CD4-positive, alpha-beta memory T cell (primary cell): ENCODE measurements at regions of chr9 and their contacts with region 1.

Region 1: GRCh38 chr9:129726322-129727160 is 26.3 kb downstream of the PTGES start:
- DNase-seq: peak in 4 of 5 donors; percentile 49 to 52 (median 50)
- H3K4me3 ChIP-seq: no peak overlapping the region
- H3K4me3 Mint-ChIP-seq: peak overlapping the region in 4 of 8 donors; percentile 35 to 55 (median 46)
- H3K27ac ChIP-seq: no peak overlapping the region
- H3K27ac Mint-ChIP-seq: peak overlapping the region in 1 of 7 donors; percentile 35
- H3K4me1 ChIP-seq: no peaks in the 10 kb centered on the region
- H3K4me1 Mint-ChIP-seq: peaks cover 0 to 4% (median under 1%) of the 10 kb centered on the region in 4 donors
- H3K27me3 ChIP-seq: no peaks in the 10 kb centered on the region
- H3K27me3 Mint-ChIP-seq: peaks cover 0 to 6% of the 10 kb centered on the region in 2 donors

Region 2: GRCh38 chr9:128494108-128494745 is 1232.3 kb before region 1 on chr9:
- CTCF ChIA-PET with region 1: no interaction called
- POLR2A ChIA-PET with region 1: no interaction called
- intact Hi-C with region 1: no loop called
- DNase-seq: no peak
- H3K4me3 ChIP-seq: no peak overlapping the region
- H3K4me3 Mint-ChIP-seq: no peak overlapping the region
- H3K27ac ChIP-seq: no peak overlapping the region
- H3K27ac Mint-ChIP-seq: no peak overlapping the region
- H3K4me1 ChIP-seq: no peaks in the 10 kb centered on the region
- H3K4me1 Mint-ChIP-seq: no peaks in the 10 kb centered on the region
- H3K27me3 ChIP-seq: no peaks in the 10 kb centered on the region
- H3K27me3 Mint-ChIP-seq: no peaks in the 10 kb centered on the region

Region 3: DNA sequence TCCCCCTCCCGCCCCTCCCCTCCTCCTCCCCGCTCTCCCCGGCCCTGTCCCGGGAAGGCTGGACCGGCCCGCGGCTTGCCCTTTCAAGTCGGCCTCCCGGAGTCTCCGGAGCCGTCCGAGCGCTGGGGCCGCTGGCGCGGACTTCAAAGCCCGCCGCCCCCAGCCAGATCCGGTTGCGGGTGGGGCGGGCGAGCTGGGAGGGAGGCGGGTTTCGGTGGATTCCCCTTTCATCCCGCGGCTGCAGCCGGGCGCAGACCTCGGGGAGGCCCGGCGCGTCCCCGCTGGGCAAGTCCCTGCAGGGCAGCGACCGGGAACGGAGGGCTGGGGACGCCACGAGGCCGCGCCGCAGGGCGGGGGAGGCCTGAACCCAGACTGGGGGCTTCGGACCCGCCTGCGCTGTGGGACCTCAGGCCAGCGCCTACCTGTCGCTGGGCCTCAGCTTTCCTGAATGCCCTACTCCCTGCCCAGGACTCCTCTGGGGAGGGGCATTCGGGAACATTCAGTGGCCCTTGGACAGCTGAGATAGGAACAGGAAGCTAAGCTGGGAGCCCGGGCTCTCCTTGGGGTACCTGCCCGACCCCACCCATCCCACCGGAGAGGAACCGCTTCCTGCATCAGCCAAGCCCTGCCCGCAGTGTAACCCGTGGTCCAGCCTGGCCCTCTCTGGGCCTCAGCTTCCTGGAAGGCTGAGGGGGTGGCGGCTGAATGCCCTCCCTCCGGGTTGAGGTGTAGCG is 129.0 kb before region 1 on chr9:
- CTCF ChIA-PET with region 1: no interaction called
- POLR2A ChIA-PET with region 1: no interaction called
- intact Hi-C with region 1: no loop called
- DNase-seq: peak in 1 of 5 donors; percentile 60
- H3K4me3 ChIP-seq: peak overlapping the region in 1 of 2 donors; percentile 45
- H3K4me3 Mint-ChIP-seq: peak overlapping the region; percentile 33 to 79 (median 68)
- H3K27ac ChIP-seq: peak overlapping the region; percentile 47
- H3K27ac Mint-ChIP-seq: peak overlapping the region in 5 of 7 donors; percentile 43 to 87 (median 71)
- H3K4me1 ChIP-seq: peaks cover 20% of the 10 kb centered on the region
- H3K4me1 Mint-ChIP-seq: peaks cover 9 to 39% (median 16%) of the 10 kb centered on the region in 4 donors
- H3K27me3 ChIP-seq: peaks cover 6% of the 10 kb centered on the region
- H3K27me3 Mint-ChIP-seq: no peaks in the 10 kb centered on the region

Region 4: GRCh38 chr9:129783516-129784361 is 57.2 kb after region 1 on chr9:
- CTCF ChIA-PET with region 1: interaction called, 31 read pairs
- POLR2A ChIA-PET with region 1: no interaction called
- intact Hi-C with region 1: loop called (anchors 1 kb)
- DNase-seq: peak; percentile 68 to 78 (median 74)
- H3K4me3 ChIP-seq: no peak overlapping the region
- H3K4me3 Mint-ChIP-seq: no peak overlapping the region
- H3K27ac ChIP-seq: no peak overlapping the region
- H3K27ac Mint-ChIP-seq: peak overlapping the region in 2 of 7 donors; percentile 20 to 61
- H3K4me1 ChIP-seq: peaks cover 3% of the 10 kb centered on the region
- H3K4me1 Mint-ChIP-seq: peaks cover 0 to 4% (median 3%) of the 10 kb centered on the region in 4 donors
- H3K27me3 ChIP-seq: no peaks in the 10 kb centered on the region
- H3K27me3 Mint-ChIP-seq: peaks cover 5 to 6% of the 10 kb centered on the region in 2 donors

Region 5: GRCh38 chr9:129796029-129796910 is 69.7 kb after region 1 on chr9:
- CTCF ChIA-PET with region 1: interaction called, 8 read pairs
- POLR2A ChIA-PET with region 1: no interaction called
- intact Hi-C with region 1: loop called (anchors 2 kb)
- DNase-seq: no peak
- H3K4me3 ChIP-seq: no peak overlapping the region
- H3K4me3 Mint-ChIP-seq: no peak overlapping the region
- H3K27ac ChIP-seq: no peak overlapping the region
- H3K27ac Mint-ChIP-seq: peak overlapping the region in 1 of 7 donors; percentile 37
- H3K4me1 ChIP-seq: no peaks in the 10 kb centered on the region
- H3K4me1 Mint-ChIP-seq: no peaks in the 10 kb centered on the region
- H3K27me3 ChIP-seq: no peaks in the 10 kb centered on the region
- H3K27me3 Mint-ChIP-seq: peaks cover 0 to 1% of the 10 kb centered on the region in 2 donors

Region 6: DNA sequence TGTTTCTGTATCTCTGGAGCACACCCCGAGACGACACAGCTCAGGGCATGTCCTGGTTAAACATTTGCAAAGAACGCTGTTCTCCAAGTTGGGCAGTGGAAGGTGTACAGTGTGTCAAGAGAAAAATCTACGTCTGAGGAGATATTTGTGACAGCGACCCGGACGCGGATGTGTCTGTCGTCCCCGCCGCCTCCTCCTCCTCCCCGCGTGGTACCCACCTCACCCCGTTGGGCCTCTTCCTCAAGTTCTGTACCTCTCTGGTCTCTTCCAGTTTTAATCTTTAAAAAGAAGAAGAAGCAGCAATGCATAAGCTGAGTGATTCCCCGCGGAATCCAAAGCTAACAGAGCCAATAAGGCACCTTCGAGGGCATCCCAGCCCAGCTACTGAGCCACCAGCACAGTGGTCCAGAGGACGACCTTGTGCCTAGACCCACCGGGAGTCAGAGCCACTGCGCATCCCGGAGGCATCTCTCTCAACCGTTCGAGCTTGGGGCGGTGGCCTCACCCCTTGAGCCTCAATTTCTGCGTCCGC is 108.0 kb after region 1 on chr9:
- CTCF ChIA-PET with region 1: no interaction called
- POLR2A ChIA-PET with region 1: no interaction called
- intact Hi-C with region 1: no loop called
- DNase-seq: peak; percentile 49 to 77 (median 62)
- H3K4me3 ChIP-seq: peak overlapping the region; percentile 50 to 76
- H3K4me3 Mint-ChIP-seq: peak overlapping the region; percentile 96 to 99 (median 98)
- H3K27ac ChIP-seq: peak overlapping the region; percentile 92
- H3K27ac Mint-ChIP-seq: peak overlapping the region; percentile 97 to 99 (median 99)
- H3K4me1 ChIP-seq: peaks cover 52% of the 10 kb centered on the region
- H3K4me1 Mint-ChIP-seq: peaks cover 37 to 62% (median 51%) of the 10 kb centered on the region in 4 donors
- H3K27me3 ChIP-seq: no peaks in the 10 kb centered on the region
- H3K27me3 Mint-ChIP-seq: no peaks in the 10 kb centered on the region